ENCODE measurements at regions of chr1 and their contacts with region 1.

Region 1: DNA sequence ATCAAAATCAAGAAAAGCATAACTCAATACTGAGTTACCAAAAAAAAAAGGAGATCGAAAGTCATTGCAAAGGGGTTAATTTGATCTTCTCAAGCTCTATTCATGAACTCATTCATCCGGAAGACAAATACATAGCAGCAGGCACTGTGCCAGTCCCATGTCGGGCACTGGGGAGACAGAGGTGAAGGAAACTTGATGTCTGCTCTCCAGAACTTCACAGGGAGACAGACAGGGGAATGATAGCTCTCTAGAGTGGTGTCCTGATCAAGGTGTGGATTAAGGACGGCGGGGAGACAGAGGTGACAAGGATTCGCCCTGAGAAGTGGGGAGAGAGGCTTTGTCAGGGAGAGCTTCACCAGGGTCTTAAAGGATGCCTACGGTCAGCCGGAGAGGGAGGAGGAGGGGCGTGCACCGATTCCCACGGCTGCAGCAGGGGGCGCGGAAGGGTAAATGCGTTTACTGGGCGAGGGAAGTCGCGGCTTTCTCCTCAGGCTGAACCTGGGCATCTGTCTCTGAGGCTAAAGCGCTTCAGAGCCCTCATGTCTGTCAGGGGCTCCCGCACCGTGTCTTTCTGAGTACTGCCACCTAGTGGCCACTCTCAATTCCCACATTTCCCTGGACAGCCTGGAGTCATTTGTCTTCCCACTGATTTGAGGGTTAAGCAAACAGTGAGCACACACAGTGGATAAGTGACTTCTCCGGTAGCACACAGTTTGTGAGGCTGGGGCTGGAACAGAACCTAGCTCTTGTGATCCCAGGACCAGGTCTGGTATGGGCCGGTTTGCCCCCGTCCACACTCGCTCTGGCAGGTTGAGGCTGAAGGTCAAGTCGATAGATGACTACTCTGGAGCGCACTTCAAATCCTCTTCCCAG is 152.8 kb downstream of the TENT5C start:
- DNase-seq: peak; percentile 77
- H3K4me3 Mint-ChIP-seq: peak overlapping the region; percentile 63
- H3K27ac Mint-ChIP-seq: no peak overlapping the region
- H3K4me1 Mint-ChIP-seq: peaks cover 12% of the 10 kb centered on the region
- H3K27me3 Mint-ChIP-seq: peaks cover 10% of the 10 kb centered on the region

Region 2: GRCh38 chr1:117067533-117068370 is 690.9 kb before region 1 on chr1:
- CTCF ChIA-PET with region 1: no interaction called
- intact Hi-C with region 1: loop called (anchors 5 kb)
- DNase-seq: peak; percentile 58
- H3K4me3 Mint-ChIP-seq: no peak overlapping the region
- H3K27ac Mint-ChIP-seq: no peak overlapping the region
- H3K4me1 Mint-ChIP-seq: peaks cover 39% of the 10 kb centered on the region
- H3K27me3 Mint-ChIP-seq: no peaks in the 10 kb centered on the region

Region 3: DNA sequence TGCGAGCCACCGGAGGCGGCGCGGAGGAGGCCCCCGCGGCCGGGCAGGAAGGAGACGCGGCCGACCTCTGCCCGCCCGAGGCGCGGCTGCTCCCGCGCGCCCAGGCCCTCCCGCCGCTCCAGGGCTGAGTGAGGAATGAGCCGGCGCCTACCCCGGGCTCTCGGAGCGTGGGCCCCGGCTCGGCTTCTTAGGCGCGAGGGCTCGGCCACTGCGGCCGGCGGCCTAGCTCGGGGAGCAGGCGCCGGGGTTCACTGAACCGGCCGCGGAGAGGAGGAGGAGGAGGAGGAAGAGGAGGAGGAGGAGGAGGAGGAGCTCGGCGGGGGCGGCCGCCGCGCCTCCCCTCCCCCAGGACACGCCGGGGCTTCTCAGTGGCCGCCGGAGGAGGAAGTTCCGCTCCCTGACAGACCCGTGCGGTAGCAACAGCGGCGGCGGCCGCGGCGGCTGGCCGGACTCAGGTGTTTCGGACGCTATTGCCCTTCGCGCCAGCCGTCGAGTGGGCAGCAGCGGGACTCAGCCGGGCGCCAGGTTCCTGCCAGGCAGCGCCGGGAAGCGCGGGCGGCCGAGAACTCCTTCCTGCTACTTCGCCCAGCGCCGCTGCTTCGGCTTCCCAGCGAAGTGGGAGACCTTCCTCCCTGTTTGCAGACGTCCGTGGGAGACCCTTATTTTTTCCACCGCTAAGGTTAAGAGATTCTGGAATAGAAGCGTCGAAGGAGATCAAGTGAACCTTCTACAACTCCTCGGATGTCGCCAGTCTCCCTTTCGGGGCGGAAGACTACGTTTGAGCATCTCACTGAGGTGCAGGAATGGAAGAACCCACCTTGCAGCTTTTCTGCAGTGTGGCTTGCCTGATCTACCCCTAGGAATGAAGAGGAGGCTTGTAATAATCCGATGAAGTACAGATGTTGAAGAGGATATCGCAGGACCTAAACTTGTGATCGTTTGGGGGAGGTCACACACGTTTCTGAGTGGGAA is 391.3 kb before region 1 on chr1 and contains the start of gene MAN1A2:
- CTCF ChIA-PET with region 1: no interaction called
- intact Hi-C with region 1: loop called (anchors 5 kb)
- DNase-seq: peak; percentile 76
- H3K4me3 Mint-ChIP-seq: peak within 1 kb of the TSS; percentile 94
- H3K27ac Mint-ChIP-seq: peak within 1 kb of the TSS; percentile 94
- H3K4me1 Mint-ChIP-seq: peaks cover 48% of the 10 kb centered on the region
- H3K27me3 Mint-ChIP-seq: no peaks in the 10 kb centered on the region
- total RNA-seq, gene MAN1A2: 14.6 to 17.4 TPM

Region 4: GRCh38 chr1:117541003-117541402 is 217.7 kb before region 1 on chr1:
- CTCF ChIA-PET with region 1: interaction called, 244 read pairs
- intact Hi-C with region 1: loop called (anchors 1 kb)
- DNase-seq: no peak
- H3K4me3 Mint-ChIP-seq: no peak overlapping the region
- H3K27ac Mint-ChIP-seq: no peak overlapping the region
- H3K4me1 Mint-ChIP-seq: peaks cover 19% of the 10 kb centered on the region
- H3K27me3 Mint-ChIP-seq: no peaks in the 10 kb centered on the region

Region 5: GRCh38 chr1:117674521-117675397 is 83.9 kb before region 1 on chr1:
- CTCF ChIA-PET with region 1: interaction called, 12 read pairs
- intact Hi-C with region 1: no loop called
- DNase-seq: peak; percentile 73
- H3K4me3 Mint-ChIP-seq: no peak overlapping the region
- H3K27ac Mint-ChIP-seq: peak overlapping the region; percentile 46
- H3K4me1 Mint-ChIP-seq: peaks cover 4% of the 10 kb centered on the region
- H3K27me3 Mint-ChIP-seq: peaks cover 11% of the 10 kb centered on the region

Region 6: GRCh38 chr1:117735045-117735992 is 23.4 kb before region 1 on chr1:
- CTCF ChIA-PET with region 1: interaction called, 13 read pairs
- intact Hi-C with region 1: no loop called
- DNase-seq: peak; percentile 58
- H3K4me3 Mint-ChIP-seq: peak overlapping the region; percentile 64
- H3K27ac Mint-ChIP-seq: peak overlapping the region; percentile 81
- H3K4me1 Mint-ChIP-seq: peaks cover 11% of the 10 kb centered on the region
- H3K27me3 Mint-ChIP-seq: no peaks in the 10 kb centered on the region

Region 7: DNA sequence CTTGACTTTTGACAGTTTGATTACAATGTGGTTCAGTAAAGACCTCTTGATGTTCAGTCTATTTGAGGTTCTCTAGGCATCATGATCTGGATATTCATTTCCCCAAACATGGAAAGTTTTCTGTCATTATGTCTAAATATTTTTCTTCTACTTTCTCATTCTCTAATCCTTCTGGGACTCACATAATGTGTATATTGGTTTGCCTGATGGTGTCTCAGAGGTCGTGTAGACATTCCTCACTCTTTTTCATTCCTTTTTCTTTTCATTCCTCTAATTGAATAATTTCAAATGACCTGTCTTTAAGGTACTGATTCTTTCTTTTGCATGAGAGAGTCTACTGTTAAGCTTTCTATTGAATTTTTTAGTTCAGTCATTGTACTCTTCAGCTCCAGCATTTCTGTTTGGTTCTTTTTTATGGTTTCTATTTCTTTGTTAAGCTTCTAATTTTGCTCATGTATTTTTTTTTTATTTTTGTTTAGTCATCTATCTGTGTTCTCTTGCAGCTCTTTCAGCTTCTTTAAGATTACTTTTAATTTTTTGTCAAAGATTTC is 12.4 kb after region 1 on chr1:
- CTCF ChIA-PET with region 1: interaction called, 12 read pairs
- intact Hi-C with region 1: no loop called
- DNase-seq: no peak
- H3K4me3 Mint-ChIP-seq: no peak overlapping the region
- H3K27ac Mint-ChIP-seq: no peak overlapping the region
- H3K4me1 Mint-ChIP-seq: no peaks in the 10 kb centered on the region
- H3K27me3 Mint-ChIP-seq: peaks cover 12% of the 10 kb centered on the region

Measured in activated naive CD4-positive, alpha-beta T cell treated with anti-CD3 and anti-CD28 coated beads for 36 hours (primary cell).